Caco-2 (cell line): ENCODE measurements at regions of chr5 and their contacts with region 1.

Region 1: GRCh38 chr5:81045389-81045807 is 85.2 kb downstream of the RASGRF2 start:
- DNase-seq: peak in 1 of 2 experiments; percentile 11
- H3K4me3 ChIP-seq: no peak overlapping the region
- H3K4me3 Mint-ChIP-seq: no peak overlapping the region
- H3K27ac Mint-ChIP-seq: no peak overlapping the region
- H3K4me1 ChIP-seq: peaks cover 29% of the 10 kb centered on the region
- H3K4me1 Mint-ChIP-seq: peaks cover 48% of the 10 kb centered on the region
- H3K27me3 ChIP-seq: no peaks in the 10 kb centered on the region
- H3K27me3 Mint-ChIP-seq: no peaks in the 10 kb centered on the region
- CTCF ChIP-seq: no peak

Region 2: GRCh38 chr5:80654391-80655230 is 390.8 kb before region 1 on chr5 and contains the starts of genes DHFR and MSH3:
- CTCF ChIA-PET with region 1: interaction called, 11 read pairs
- POLR2A ChIA-PET with region 1: no interaction called
- intact Hi-C with region 1: no loop called
- DNase-seq: peak; percentile 89 to 93
- H3K4me3 ChIP-seq: peak within 1 kb of the TSS; percentile 98
- H3K4me3 Mint-ChIP-seq: peak within 1 kb of the TSS; percentile 81
- H3K27ac Mint-ChIP-seq: peak within 1 kb of the TSS; percentile 82
- H3K4me1 ChIP-seq: peaks cover 14% of the 10 kb centered on the region
- H3K4me1 Mint-ChIP-seq: peaks cover 11% of the 10 kb centered on the region
- H3K27me3 ChIP-seq: no peaks in the 10 kb centered on the region
- H3K27me3 Mint-ChIP-seq: no peaks in the 10 kb centered on the region
- CTCF ChIP-seq: peak; percentile 19 to 54
- total RNA-seq, gene DHFR: 57.2 and 59.2 TPM in 2 replicates
- total RNA-seq, gene MSH3: 15.9 and 17.1 TPM in 2 replicates

Region 3: DNA sequence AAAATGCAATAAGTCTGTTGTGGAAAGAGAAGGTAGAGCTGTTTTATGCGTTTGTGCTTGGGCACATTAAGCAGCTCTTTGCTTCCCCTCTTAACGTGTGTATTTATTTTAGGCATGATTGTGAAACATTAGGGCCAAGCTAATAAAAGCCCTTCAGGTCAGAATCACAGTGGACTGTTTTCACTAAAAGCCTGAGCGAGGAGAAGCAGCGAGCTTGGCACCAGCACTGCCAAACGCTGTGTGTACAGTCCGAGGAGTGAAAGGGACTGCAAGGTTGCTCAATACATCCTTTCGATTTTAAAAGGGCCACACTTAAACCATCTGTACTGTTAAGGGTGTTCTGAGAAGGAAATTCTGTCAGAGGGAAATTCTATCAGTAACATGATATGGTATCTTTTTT is 80.6 kb after region 1 on chr5:
- CTCF ChIA-PET with region 1: no interaction called
- POLR2A ChIA-PET with region 1: no interaction called
- intact Hi-C with region 1: no loop called
- DNase-seq: no peak
- H3K4me3 ChIP-seq: no peak overlapping the region
- H3K4me3 Mint-ChIP-seq: no peak overlapping the region
- H3K27ac Mint-ChIP-seq: no peak overlapping the region
- H3K4me1 ChIP-seq: no peaks in the 10 kb centered on the region
- H3K4me1 Mint-ChIP-seq: no peaks in the 10 kb centered on the region
- H3K27me3 ChIP-seq: no peaks in the 10 kb centered on the region
- H3K27me3 Mint-ChIP-seq: no peaks in the 10 kb centered on the region
- CTCF ChIP-seq: no peak